Right ventricle myocardium inferior (tissue), 1 donor: ENCODE measurements at regions of chr14 and their contacts with region 1.

Region 1: DNA sequence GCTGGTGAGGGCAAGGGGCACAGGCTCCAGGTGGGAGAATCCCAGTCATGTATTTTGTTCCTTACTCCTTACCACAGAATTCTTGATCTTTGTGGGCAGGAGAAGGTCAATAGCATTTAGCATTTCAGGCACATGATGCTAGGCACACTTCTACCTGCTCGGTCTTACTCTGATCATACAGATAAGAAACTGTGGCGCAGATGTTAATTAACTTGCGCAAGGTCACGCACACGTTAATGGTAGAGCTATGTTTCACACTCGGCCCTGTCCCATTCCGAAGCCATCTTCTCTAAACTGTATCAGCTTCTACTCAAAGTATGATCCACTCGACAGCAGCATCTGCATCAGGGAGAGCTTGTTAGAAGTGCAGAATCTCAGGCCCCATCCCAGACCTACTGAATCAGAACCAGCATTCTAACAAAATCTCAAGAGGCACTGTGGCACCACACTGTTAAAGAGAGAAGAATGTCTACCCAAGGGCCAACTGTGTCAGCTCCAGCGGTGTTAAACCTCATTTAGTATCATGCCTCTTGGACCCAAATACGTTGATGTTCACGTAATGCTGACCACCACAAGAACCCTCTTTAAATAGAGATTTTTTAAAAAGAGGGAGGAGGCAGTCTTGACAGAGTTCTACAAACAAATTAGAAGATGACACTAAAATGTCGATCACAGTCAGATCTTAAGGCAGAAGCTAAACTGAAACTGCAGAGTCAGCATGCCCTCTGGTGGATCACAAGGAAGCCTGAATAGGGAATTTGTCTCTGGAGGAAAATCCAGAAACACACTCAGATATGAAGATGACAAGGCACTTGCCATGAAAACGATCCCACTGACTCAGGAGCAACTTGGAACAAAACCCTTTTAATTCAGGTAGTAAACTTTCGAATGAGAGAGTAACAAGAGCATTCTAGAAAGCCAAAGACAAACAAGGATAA is 7.3 kb downstream of the STXBP6 start:
- DNase-seq: no peak
- ATAC-seq: peak; percentile 32

Region 2: DNA sequence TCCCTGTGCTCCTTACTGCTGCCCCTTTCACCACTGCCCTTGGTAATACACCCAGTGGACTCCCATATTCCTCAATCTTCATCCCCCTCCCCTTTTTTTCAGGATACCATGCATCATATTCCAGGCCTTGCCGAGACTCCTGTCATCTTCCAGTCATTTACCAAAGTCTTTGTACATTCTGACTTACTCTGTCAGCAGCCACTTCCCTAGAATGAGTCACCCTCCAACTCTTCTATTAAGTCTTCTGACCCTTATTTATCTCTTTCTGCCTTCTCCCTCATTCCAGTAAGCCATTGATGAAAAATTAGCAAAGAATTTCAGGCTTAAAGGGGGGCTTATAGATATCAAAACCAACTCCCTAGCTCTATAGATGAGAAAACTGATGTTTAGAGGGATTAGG is 120.7 kb before region 1 on chr14:
- intact Hi-C with region 1: no loop called
- DNase-seq: no peak
- ATAC-seq: no peak

Region 3: GRCh38 chr14:25019892-25020291 is 22.7 kb before region 1 on chr14:
- intact Hi-C with region 1: loop called (anchors 2 kb)
- DNase-seq: no peak
- ATAC-seq: no peak